ENCODE measurements at regions of chr3 and their contacts with region 1.

Region 1: GRCh38 chr3:48556793-48557626 is at the start of gene PFKFB4:
- DNase-seq: peak; percentile 99
- ATAC-seq: peak; percentile 94
- total RNA-seq, gene PFKFB4: 2.4 TPM

Region 2: GRCh38 chr3:48598323-48599076 is 41.5 kb after region 1 on chr3:
- intact Hi-C with region 1: loop called (anchors 2 kb)
- DNase-seq: peak; percentile 74
- ATAC-seq: peak; percentile 80

Region 3: DNA sequence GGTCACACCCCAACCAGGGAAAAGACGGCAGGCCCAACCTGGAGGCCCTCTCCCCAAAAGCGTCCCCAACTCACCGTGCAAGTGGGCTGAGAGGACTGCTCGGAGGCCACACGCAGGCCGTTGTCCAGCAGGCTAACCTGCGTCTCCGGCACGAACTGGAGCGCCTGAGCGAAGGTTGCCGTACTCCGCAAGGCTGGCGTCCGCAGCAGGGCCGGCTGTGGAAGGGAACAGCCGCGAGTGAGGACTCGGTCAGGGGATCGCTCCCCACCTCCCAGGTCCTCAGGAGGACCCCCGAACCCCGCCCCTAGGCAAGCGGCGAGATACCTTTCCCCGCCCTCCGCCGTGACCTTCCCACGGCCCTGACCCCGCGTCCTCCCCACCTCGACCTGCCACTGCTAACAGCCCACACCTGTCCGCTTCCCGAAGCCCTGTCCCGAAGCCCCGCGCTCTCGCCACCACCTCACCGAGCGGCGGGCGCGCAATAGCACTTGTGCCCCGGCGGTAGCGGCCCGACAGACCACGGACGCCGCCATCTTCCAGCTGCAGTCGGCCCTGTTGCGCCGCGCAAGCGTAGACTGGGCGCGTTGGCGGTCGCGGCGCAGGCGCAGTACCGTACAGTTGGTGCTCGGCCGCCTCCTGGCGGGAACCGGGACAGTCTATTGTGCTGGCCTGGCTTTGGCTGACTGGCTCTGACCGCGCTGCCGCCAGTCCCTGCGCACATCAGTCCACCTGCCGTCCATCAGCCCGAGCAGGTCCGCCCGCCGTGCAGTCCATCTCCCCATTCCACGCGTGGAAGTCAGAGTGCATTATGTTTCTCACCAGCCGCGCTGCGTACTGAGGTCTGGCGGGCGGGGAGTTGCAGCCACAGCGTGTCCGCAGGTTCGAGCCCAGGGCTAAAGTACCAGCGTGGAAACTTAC is 52.3 kb after region 1 on chr3 and contains the start of gene UQCRC1:
- intact Hi-C with region 1: loop called (anchors 2 kb)
- DNase-seq: peak; percentile 96
- ATAC-seq: peak; percentile 100
- total RNA-seq, gene UQCRC1: 1,186 TPM

Measured in Right ventricle myocardium inferior (tissue), 1 donor.